CD8-positive, alpha-beta T cell (primary cell): ENCODE measurements at regions of chr9 and their contacts with region 1.

Region 1: GRCh38 chr9:37079370-37080164 is 40.8 kb upstream of the ZCCHC7 start:
- DNase-seq: peak; percentile 84 to 97 (median 92)
- ATAC-seq: peak; percentile 95
- H3K4me3 ChIP-seq: peak overlapping the region; percentile 61 to 81
- H3K4me3 Mint-ChIP-seq: peak overlapping the region; percentile 92
- H3K27ac ChIP-seq: peak overlapping the region; percentile 88 to 95
- H3K27ac Mint-ChIP-seq: peak overlapping the region; percentile 98
- H3K4me1 ChIP-seq: peaks cover 41% of the 10 kb centered on the region
- H3K4me1 Mint-ChIP-seq: peaks cover 42% of the 10 kb centered on the region
- H3K27me3 ChIP-seq: no peaks in the 10 kb centered on the region
- H3K27me3 Mint-ChIP-seq: no peaks in the 10 kb centered on the region
- CTCF ChIP-seq: no peak

Region 2: DNA sequence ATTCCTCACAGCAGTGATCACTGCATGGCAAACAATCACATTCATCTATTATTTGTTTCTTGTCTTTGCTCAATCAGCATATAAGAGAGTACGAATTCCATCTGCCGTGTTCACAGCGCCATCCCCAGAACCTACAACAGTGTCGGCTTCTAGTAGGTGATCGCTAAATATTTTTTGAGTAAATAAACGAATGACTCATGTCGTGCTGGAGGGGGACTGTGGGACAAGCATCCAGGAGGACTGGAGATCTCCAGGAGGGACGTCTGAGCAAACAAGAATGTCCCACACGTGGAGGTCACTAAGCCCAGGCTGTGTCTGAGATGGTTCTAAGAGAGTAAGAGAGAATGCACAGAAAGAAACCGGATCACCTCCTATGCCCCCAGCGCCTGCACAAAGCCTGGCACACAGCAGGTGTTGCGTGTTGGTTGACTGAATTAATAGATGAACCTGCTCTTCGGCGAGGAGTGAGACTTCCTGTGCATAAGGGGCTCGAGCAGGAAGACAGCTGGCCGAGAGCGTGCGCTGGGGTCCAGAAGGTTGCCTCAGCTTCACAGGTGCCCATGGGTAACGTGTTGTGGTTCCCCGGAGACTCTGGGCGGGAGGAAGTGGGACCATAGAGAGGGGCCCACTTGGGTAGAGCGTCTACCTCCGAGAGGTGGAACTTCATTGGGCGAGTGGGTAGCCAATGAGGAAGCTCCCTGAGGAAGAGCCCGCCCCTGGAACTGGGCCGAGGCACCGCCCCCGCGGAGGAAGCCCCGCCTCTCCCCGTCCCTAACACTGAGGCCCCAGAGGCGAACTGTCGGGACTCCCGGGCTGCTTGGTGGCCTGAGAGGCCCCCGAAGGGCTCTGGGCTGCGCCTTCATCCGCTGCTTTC is 313.9 kb before region 1 on chr9:
- CTCF ChIA-PET with region 1: no interaction called
- POLR2A ChIA-PET with region 1: interaction called, 3 read pairs
- intact Hi-C with region 1: loop called in 1 of 2 experiments (anchors 5 kb)
- DNase-seq: peak; percentile 68 to 95 (median 89)
- ATAC-seq: peak; percentile 99
- H3K4me3 ChIP-seq: peak overlapping the region; percentile 47 to 54
- H3K4me3 Mint-ChIP-seq: no peak overlapping the region
- H3K27ac ChIP-seq: peak overlapping the region; percentile 23 to 39
- H3K27ac Mint-ChIP-seq: peak overlapping the region; percentile 71
- H3K4me1 ChIP-seq: peaks cover 6% of the 10 kb centered on the region
- H3K4me1 Mint-ChIP-seq: peaks cover 6% of the 10 kb centered on the region
- H3K27me3 ChIP-seq: peaks cover 0 to 7% of the 10 kb centered on the region in 2 experiments
- H3K27me3 Mint-ChIP-seq: peaks cover 5% of the 10 kb centered on the region
- CTCF ChIP-seq: no peak

Region 3: DNA sequence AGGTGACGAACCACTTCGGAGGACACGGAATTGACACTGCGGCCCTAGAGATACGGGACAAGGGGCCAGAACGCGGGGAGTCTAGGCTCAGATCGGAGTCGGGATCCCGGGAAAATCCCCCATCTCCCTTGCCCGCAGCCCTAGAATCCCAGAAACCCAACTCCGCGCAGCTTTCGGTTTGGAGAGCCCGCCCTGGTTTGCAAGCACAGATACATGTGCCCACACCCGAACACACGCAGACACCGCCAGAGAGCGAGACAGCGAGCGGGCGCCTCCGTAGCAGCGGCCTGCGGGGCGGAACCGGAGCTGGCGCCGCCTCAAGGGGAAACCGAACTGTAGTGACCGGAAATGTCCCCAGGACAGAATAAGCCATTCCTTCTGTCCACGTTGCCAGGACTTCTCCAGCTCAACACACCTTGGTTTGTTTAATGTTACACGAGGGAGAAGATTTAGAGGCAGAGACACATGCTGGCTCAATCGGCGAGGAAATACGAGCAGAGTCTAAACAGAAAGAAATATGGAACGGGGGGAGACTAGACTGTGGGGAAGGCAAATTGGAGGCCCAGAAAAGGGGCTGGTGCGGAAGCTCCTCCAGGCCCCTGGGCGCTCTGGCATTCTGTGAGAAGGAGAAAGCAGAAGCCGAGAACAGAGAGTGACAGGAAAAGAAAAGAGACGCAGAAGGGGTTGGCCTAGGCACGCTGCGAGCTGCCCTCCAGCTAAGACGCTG is 42.6 kb before region 1 on chr9:
- CTCF ChIA-PET with region 1: no interaction called
- POLR2A ChIA-PET with region 1: interaction called, 3 read pairs
- intact Hi-C with region 1: loop called (anchors 1 to 2 kb)
- DNase-seq: peak in 4 of 9 experiments; percentile 40 to 67 (median 56)
- ATAC-seq: peak; percentile 70
- H3K4me3 ChIP-seq: peak overlapping the region; percentile 41 to 54
- H3K4me3 Mint-ChIP-seq: peak overlapping the region; percentile 91
- H3K27ac ChIP-seq: no peak overlapping the region
- H3K27ac Mint-ChIP-seq: peak overlapping the region; percentile 13
- H3K4me1 ChIP-seq: peaks cover 48% of the 10 kb centered on the region
- H3K4me1 Mint-ChIP-seq: peaks cover 33% of the 10 kb centered on the region
- H3K27me3 ChIP-seq: peaks cover 60% of the 10 kb centered on the region in 2 experiments
- H3K27me3 Mint-ChIP-seq: peaks cover 76% of the 10 kb centered on the region
- CTCF ChIP-seq: no peak

Region 4: DNA sequence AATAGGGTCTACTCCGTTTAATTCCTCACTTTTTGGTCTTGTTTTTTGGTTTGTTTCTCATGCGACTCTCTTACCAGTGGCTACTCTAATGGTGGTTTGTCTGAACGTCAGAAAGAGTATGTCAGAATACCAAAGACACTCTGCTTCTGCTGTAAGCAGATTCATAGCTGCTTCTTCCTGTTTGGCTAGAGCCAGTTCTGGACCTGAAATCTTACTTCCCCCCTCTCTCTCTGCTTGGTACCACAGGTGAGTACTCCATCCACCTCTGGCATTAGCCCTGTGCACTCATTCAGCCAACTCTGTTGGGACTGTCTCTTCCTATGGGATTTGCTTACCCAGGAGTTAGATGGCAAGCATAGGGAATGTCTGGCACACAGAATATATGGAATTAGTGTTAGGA is 47.5 kb after region 1 on chr9:
- CTCF ChIA-PET with region 1: no interaction called
- POLR2A ChIA-PET with region 1: no interaction called
- intact Hi-C with region 1: no loop called
- DNase-seq: no peak
- ATAC-seq: no peak
- H3K4me3 ChIP-seq: no peak overlapping the region
- H3K4me3 Mint-ChIP-seq: no peak overlapping the region
- H3K27ac ChIP-seq: no peak overlapping the region
- H3K27ac Mint-ChIP-seq: no peak overlapping the region
- H3K4me1 ChIP-seq: peaks cover 22% of the 10 kb centered on the region
- H3K4me1 Mint-ChIP-seq: peaks cover 32% of the 10 kb centered on the region
- H3K27me3 ChIP-seq: no peaks in the 10 kb centered on the region
- H3K27me3 Mint-ChIP-seq: no peaks in the 10 kb centered on the region
- CTCF ChIP-seq: no peak

Region 5: DNA sequence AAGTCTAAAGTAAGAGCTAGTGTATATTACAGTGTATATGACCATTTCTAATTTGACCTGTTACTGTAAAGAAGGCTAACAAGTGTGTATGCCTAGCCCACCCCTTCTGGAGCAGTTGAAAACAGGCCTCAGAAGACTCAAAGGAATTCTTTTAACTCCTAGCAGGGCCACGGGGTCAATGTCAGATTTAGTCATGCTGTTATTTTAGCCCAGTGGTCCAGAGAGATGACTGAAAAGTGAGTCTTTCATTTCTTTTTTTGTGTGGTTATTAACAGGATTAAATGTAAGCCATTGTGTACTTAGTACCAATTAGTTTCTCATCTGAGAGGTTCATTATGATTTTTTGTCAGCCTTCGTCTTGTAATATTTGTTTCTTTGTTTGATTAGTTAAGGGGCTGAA is 65.2 kb after region 1 on chr9:
- CTCF ChIA-PET with region 1: no interaction called
- POLR2A ChIA-PET with region 1: interaction called, 7 read pairs
- intact Hi-C with region 1: loop called in 1 of 2 experiments (anchors 2 kb)
- DNase-seq: no peak
- ATAC-seq: no peak
- H3K4me3 ChIP-seq: no peak overlapping the region
- H3K4me3 Mint-ChIP-seq: peak overlapping the region; percentile 29
- H3K27ac ChIP-seq: peak overlapping the region in 1 of 2 experiments; percentile 22
- H3K27ac Mint-ChIP-seq: peak overlapping the region; percentile 85
- H3K4me1 ChIP-seq: peaks cover 36% of the 10 kb centered on the region
- H3K4me1 Mint-ChIP-seq: peaks cover 63% of the 10 kb centered on the region
- H3K27me3 ChIP-seq: no peaks in the 10 kb centered on the region
- H3K27me3 Mint-ChIP-seq: no peaks in the 10 kb centered on the region
- CTCF ChIP-seq: no peak

Region 6: DNA sequence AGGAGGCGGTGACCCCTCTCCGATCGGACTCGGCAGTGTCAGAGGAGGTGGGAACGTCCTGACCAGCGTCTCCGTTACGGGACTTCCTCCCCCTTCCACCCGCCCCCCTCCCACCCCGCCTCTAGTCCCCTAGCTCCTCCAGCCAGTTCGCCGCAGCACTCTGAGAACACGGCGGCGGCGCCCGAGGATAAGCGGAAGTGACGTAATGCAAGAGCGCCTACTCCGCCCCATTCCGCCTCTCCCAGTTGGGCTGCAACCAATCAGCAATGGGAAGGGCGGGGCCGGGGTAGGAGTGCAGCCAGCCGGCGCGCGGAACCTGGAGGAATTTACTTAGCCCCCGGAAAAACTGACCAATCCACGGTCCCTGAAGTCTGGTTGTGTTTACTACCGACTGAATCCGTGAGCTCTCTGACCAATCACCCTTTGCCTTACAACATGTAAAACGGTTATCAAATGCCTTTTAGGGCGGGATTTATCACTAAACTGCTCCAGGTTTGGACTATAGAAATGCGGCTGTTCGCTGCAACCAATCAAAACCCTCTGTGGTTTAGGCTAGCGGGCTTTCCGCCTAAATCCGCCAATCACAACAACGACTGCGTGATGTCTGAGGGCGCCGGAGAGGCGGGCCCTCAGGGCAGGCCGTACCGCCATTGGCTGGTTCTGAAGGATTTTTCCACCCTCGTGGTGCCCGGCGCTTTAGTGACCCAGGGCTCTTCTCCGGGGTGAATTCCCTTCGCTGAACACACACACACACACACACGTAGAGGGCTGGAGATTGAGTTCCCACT is 385.9 kb after region 1 on chr9 and contains the start of gene ZBTB5:
- CTCF ChIA-PET with region 1: no interaction called
- POLR2A ChIA-PET with region 1: no interaction called
- intact Hi-C with region 1: loop called in 1 of 2 experiments (anchors 1 kb)
- DNase-seq: peak; percentile 97 to 100 (median 99)
- ATAC-seq: peak; percentile 79
- H3K4me3 ChIP-seq: peak within 1 kb of the TSS; percentile 91 to 97
- H3K4me3 Mint-ChIP-seq: peak within 1 kb of the TSS; percentile 95
- H3K27ac ChIP-seq: peak within 1 kb of the TSS; percentile 86 to 97
- H3K27ac Mint-ChIP-seq: peak within 1 kb of the TSS; percentile 98
- H3K4me1 ChIP-seq: peaks cover 23% of the 10 kb centered on the region
- H3K4me1 Mint-ChIP-seq: peaks cover 40% of the 10 kb centered on the region
- H3K27me3 ChIP-seq: no peaks in the 10 kb centered on the region
- H3K27me3 Mint-ChIP-seq: no peaks in the 10 kb centered on the region
- CTCF ChIP-seq: no peak
- total RNA-seq, gene ZBTB5: 18.5 to 18.7 TPM

Region 7: GRCh38 chr9:37753489-37754190 is 674.1 kb after region 1 on chr9 and contains the start of gene TRMT10B:
- CTCF ChIA-PET with region 1: no interaction called
- POLR2A ChIA-PET with region 1: no interaction called
- intact Hi-C with region 1: loop called in 1 of 2 experiments (anchors 5 kb)
- DNase-seq: peak; percentile 32 to 85 (median 69)
- ATAC-seq: peak; percentile 95
- H3K4me3 ChIP-seq: peak within 1 kb of the TSS; percentile 88 to 98
- H3K4me3 Mint-ChIP-seq: peak within 1 kb of the TSS; percentile 97
- H3K27ac ChIP-seq: peak within 1 kb of the TSS; percentile 74 to 92
- H3K27ac Mint-ChIP-seq: peak within 1 kb of the TSS; percentile 95
- H3K4me1 ChIP-seq: peaks cover 13% of the 10 kb centered on the region
- H3K4me1 Mint-ChIP-seq: peaks cover 35% of the 10 kb centered on the region
- H3K27me3 ChIP-seq: no peaks in the 10 kb centered on the region
- H3K27me3 Mint-ChIP-seq: no peaks in the 10 kb centered on the region
- CTCF ChIP-seq: no peak
- total RNA-seq, gene TRMT10B: 5.9 to 7.0 TPM